Endothelial cell of umbilical vein (primary cell): ENCODE measurements at regions of chr3 and their contacts with region 1.

Region 1: GRCh38 chr3:45037734-45038455 is 11.8 kb downstream of the CLEC3B start:
- DNase-seq: peak; percentile 95
- H3K4me3 ChIP-seq: no peak overlapping the region
- H3K27ac ChIP-seq: no peak overlapping the region
- H3K4me1 ChIP-seq: no peaks in the 10 kb centered on the region
- H3K27me3 ChIP-seq: no peaks in the 10 kb centered on the region
- CTCF ChIP-seq: peak; percentile 94 to 95
- POLR2A ChIP-seq: no peak

Region 2: GRCh38 chr3:44529927-44530326 is 508.0 kb before region 1 on chr3:
- CTCF ChIA-PET with region 1: no interaction called
- POLR2A ChIA-PET with region 1: no interaction called
- dilution Hi-C with region 1: no loop called
- intact Hi-C with region 1: loop called (anchors 2 kb)
- DNase-seq: peak; percentile 8
- H3K4me3 ChIP-seq: no peak overlapping the region
- H3K27ac ChIP-seq: no peak overlapping the region
- H3K4me1 ChIP-seq: no peaks in the 10 kb centered on the region
- H3K27me3 ChIP-seq: no peaks in the 10 kb centered on the region
- CTCF ChIP-seq: peak; percentile 21 to 23
- POLR2A ChIP-seq: no peak

Region 3: GRCh38 chr3:44803298-44803697 is 234.6 kb before region 1 on chr3:
- CTCF ChIA-PET with region 1: no interaction called
- POLR2A ChIA-PET with region 1: no interaction called
- dilution Hi-C with region 1: no loop called
- intact Hi-C with region 1: no loop called
- DNase-seq: no peak
- H3K4me3 ChIP-seq: no peak overlapping the region
- H3K27ac ChIP-seq: no peak overlapping the region
- H3K4me1 ChIP-seq: no peaks in the 10 kb centered on the region
- H3K27me3 ChIP-seq: no peaks in the 10 kb centered on the region
- CTCF ChIP-seq: no peak
- POLR2A ChIP-seq: no peak

Region 4: GRCh38 chr3:44992555-44993470 is 45.1 kb before region 1 on chr3:
- CTCF ChIA-PET with region 1: interaction called, 4 read pairs
- POLR2A ChIA-PET with region 1: no interaction called
- dilution Hi-C with region 1: no loop called
- intact Hi-C with region 1: loop called (anchors 2 kb)
- DNase-seq: no peak
- H3K4me3 ChIP-seq: no peak overlapping the region
- H3K27ac ChIP-seq: no peak overlapping the region
- H3K4me1 ChIP-seq: peaks cover 7% of the 10 kb centered on the region
- H3K27me3 ChIP-seq: no peaks in the 10 kb centered on the region
- CTCF ChIP-seq: peak; percentile 78 to 79
- POLR2A ChIP-seq: no peak

Region 5: DNA sequence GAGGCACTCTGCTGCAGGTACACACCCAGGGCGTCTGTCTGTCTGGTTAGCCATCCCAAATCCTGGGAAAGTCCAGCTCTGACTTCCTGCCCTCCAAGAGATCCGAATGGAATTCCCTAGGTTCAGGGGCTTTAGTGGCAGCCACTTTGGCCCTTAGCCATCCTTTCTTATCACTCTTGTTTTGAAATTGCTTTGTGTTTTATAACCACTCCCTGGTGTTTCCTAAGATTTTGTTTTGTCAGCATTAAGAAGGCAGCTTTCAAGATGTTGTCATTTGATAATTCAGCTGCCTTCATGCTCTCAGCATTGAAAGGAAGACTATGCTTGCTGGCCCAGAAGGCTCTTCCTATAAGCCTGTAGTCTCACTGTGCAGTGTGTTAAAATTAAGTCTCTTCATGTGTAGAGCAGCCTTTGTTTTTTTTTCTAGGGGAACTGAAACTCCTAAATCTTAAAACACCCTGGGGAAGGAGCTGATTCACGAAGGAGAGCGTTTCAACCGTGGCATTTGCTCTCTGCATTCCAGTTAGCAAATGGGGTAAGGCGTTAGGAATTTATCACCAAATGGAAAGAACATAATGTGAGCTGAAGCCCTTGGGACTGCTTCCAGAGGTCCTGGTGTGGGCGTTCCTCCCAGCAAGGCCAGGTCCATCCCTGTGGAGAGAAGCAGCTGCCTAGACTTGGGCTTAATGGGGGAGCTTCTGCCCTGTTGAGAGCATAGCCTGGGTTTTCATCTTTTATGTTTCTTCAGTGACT is 26.0 kb before region 1 on chr3:
- CTCF ChIA-PET with region 1: interaction called, 6 read pairs
- POLR2A ChIA-PET with region 1: no interaction called
- dilution Hi-C with region 1: no loop called
- intact Hi-C with region 1: loop called (anchors 1 kb)
- DNase-seq: peak; percentile 98
- H3K4me3 ChIP-seq: no peak overlapping the region
- H3K27ac ChIP-seq: peak overlapping the region; percentile 98
- H3K4me1 ChIP-seq: peaks cover 23% of the 10 kb centered on the region
- H3K27me3 ChIP-seq: no peaks in the 10 kb centered on the region
- CTCF ChIP-seq: no peak
- POLR2A ChIP-seq: no peak

Region 6: DNA sequence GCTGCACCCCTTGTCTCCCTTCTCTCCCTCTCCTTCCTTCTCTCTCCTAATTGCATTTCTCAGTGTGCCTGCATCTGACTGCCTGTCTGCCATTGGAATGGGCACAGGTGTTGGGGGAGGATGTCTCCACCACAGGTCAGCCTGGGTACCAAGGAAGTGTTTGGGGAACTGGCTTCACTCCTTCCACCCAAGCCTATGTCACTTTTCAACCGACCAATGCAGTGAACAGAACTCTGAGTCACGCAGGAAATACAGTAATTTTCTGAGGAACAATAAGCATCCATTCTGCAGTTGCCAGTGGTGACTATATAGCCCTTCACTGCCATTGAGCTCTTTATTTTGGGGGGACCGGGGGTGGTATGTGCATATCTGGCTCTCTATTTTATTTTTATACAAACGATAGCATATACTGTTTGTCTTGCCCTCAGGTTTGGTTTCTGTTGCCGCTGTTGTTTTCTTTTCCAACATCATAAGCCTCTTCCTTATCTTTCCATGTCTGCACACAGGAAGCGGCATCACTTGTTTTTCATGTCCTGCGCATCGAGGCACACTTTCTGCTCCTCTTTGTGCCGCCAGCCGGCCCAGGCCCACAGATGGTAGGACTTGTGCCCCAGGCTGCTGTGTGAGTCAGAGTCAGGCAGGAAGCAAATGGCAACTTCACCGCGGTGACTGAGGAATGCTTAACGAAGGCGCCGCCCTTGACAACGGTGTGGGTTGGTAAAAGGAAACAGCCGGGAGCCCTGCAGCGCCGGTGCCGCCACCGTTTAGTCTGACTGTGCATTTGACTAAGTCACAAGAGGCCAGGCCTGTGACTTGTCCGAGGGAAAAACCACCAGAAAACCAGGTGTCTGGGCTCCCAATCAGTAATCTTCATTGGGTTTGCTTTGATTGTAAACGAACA is 129.4 kb after region 1 on chr3:
- CTCF ChIA-PET with region 1: interaction called, 18 read pairs
- POLR2A ChIA-PET with region 1: no interaction called
- dilution Hi-C with region 1: no loop called
- intact Hi-C with region 1: loop called (anchors 1 kb)
- DNase-seq: peak; percentile 93
- H3K4me3 ChIP-seq: peak overlapping the region in 1 of 3 experiments; percentile 28
- H3K27ac ChIP-seq: peak overlapping the region; percentile 97
- H3K4me1 ChIP-seq: peaks cover 22% of the 10 kb centered on the region
- H3K27me3 ChIP-seq: no peaks in the 10 kb centered on the region
- CTCF ChIP-seq: no peak
- POLR2A ChIP-seq: peak; percentile 11

Region 7: GRCh38 chr3:45224824-45225464 is 187.0 kb after region 1 on chr3:
- CTCF ChIA-PET with region 1: interaction called, 61 read pairs
- POLR2A ChIA-PET with region 1: no interaction called
- dilution Hi-C with region 1: no loop called
- intact Hi-C with region 1: loop called (anchors 1 kb)
- DNase-seq: peak; percentile 64
- H3K4me3 ChIP-seq: peak overlapping the region; percentile 12 to 76 (median 45)
- H3K27ac ChIP-seq: no peak overlapping the region
- H3K4me1 ChIP-seq: peaks cover 10% of the 10 kb centered on the region
- H3K27me3 ChIP-seq: peaks cover 20 to 42% of the 10 kb centered on the region in 2 experiments
- CTCF ChIP-seq: peak; percentile 52 to 72
- POLR2A ChIP-seq: no peak

Region 8: GRCh38 chr3:45499529-45499928 is 461.6 kb after region 1 on chr3:
- CTCF ChIA-PET with region 1: interaction called, 62 read pairs
- POLR2A ChIA-PET with region 1: no interaction called
- dilution Hi-C with region 1: loop called (anchors 25 kb)
- intact Hi-C with region 1: loop called (anchors 1 kb)
- DNase-seq: peak; percentile 66
- H3K4me3 ChIP-seq: no peak overlapping the region
- H3K27ac ChIP-seq: no peak overlapping the region
- H3K4me1 ChIP-seq: peaks cover 5% of the 10 kb centered on the region
- H3K27me3 ChIP-seq: no peaks in the 10 kb centered on the region
- CTCF ChIP-seq: peak; percentile 10 to 22
- POLR2A ChIP-seq: no peak